Thyroid gland (tissue), 4 donors: ENCODE measurements at regions of chr17 and their contacts with region 1.

Region 1: GRCh38 chr17:34361478-34362061 is 1.5 kb downstream of the CCL1 start:
- DNase-seq: peak; percentile 90 to 91
- H3K4me3 ChIP-seq: no peak overlapping the region
- H3K27ac ChIP-seq: no peak overlapping the region
- H3K4me1 ChIP-seq: no peaks in the 10 kb centered on the region
- H3K27me3 ChIP-seq: no peaks in the 10 kb centered on the region
- CTCF ChIP-seq: peak; percentile 91 to 100 (median 100)
- POLR2A ChIP-seq: no peak

Region 2: GRCh38 chr17:34199932-34200534 is 161.5 kb before region 1 on chr17:
- intact Hi-C with region 1: loop called (anchors 2 kb)
- DNase-seq: peak; percentile 76 to 78
- H3K4me3 ChIP-seq: no peak overlapping the region
- H3K27ac ChIP-seq: no peak overlapping the region
- H3K4me1 ChIP-seq: peaks cover 0 to 3% of the 10 kb centered on the region in 2 donors
- H3K27me3 ChIP-seq: no peaks in the 10 kb centered on the region
- CTCF ChIP-seq: peak; percentile 99 to 100 (median 100)
- POLR2A ChIP-seq: no peak

Region 3: GRCh38 chr17:34314279-34314678 is 47.3 kb before region 1 on chr17:
- intact Hi-C with region 1: loop called (anchors 5 kb)
- DNase-seq: peak in 1 of 2 donors; percentile 1
- H3K4me3 ChIP-seq: no peak overlapping the region
- H3K27ac ChIP-seq: peak overlapping the region in 1 of 3 donors; percentile 32
- H3K4me1 ChIP-seq: peaks cover 0 to 8% of the 10 kb centered on the region in 2 donors
- H3K27me3 ChIP-seq: no peaks in the 10 kb centered on the region
- CTCF ChIP-seq: no peak
- POLR2A ChIP-seq: no peak

Region 4: GRCh38 chr17:34626141-34626681 is 264.6 kb after region 1 on chr17:
- intact Hi-C with region 1: no loop called
- DNase-seq: peak; percentile 17 to 26
- H3K4me3 ChIP-seq: no peak overlapping the region
- H3K27ac ChIP-seq: no peak overlapping the region
- H3K4me1 ChIP-seq: peaks cover 0 to 4% of the 10 kb centered on the region in 2 donors
- H3K27me3 ChIP-seq: peaks cover 12% of the 10 kb centered on the region
- CTCF ChIP-seq: no peak
- POLR2A ChIP-seq: no peak